Panc1 (cell line): ENCODE measurements at regions of chr1 and their contacts with region 1.

Region 1: DNA sequence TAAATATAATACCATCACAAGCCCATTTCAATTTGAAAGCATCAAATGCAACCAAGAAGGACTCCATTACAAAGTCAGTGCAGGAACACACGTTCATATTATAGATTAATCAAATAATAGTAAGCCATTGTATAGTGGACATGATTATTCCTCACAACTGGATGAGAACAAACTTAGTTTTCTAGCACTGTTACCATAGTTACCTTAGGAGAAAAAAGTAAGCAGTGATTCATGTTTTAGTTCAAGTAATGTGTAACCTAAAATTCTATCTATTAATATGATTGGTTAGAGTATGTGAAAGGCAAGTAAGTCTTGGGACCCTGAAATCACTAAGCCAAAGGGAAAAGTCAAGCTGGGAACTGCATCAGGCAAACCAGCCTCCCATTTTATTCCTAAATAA is 15.2 kb downstream of the SSX2IP start:
- DNase-seq: no peak
- ATAC-seq: no peak
- H3K4me3 ChIP-seq: no peak overlapping the region
- H3K27ac ChIP-seq: no peak overlapping the region
- H3K4me1 ChIP-seq: no peaks in the 10 kb centered on the region; the same call in 1 of the 2 replicates
- H3K27me3 ChIP-seq: no peaks in the 10 kb centered on the region
- CTCF ChIP-seq: no peak

Region 2: DNA sequence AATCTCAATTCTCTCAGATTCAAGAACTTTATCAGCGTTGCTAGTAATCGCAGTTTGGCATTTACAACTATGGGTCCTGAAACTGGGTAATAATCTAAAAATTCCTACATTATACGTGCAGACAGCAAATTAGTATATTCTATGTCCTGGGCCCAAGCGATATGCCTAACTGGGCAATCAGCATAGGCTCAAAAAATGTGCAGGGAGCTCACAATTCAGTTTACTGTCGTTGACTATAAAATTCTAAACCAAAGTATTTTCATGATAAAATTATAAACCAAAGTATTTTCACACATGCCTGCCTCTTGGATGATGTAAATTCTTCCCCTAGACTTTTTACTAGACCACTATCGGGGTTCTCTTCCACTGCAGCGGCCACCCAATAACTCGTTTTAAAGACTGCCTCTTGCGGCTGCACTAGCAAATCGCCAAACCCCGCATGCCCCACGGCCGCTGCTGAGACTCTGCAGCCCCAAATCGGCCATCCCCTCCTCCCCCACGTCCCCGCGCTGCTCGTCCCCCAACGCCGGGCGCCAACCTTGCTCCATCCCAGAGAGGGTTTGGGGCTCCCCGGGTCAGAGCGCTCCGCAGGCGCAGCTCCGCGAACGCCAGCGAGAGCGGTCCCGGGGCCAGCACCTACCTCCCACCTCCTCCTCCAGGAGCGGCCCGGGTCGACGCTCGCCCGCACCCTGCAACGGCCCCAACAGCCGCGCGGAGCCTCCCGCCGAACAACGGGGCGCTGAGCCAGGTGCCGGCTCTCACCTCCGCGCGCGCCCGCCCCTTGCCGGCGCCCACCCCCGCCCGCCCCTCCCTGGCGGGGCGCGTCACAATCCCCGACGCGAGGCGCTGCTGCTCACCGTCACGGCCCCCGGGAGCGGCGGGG is 14.7 kb after region 1 on chr1:
- CTCF ChIA-PET with region 1: no interaction called
- POLR2A ChIA-PET with region 1: interaction called, 17 read pairs
- in situ Hi-C with region 1: no loop called
- intact Hi-C with region 1: no loop called
- DNase-seq: no peak
- ATAC-seq: peak; percentile 61
- H3K4me3 ChIP-seq: peak overlapping the region; percentile 65 to 83
- H3K27ac ChIP-seq: peak overlapping the region; percentile 91
- H3K4me1 ChIP-seq: peaks cover 40% of the 10 kb centered on the region
- H3K27me3 ChIP-seq: no peaks in the 10 kb centered on the region
- CTCF ChIP-seq: peak; percentile 79

Region 3: GRCh38 chr1:84700070-84700469 is 25.0 kb after region 1 on chr1:
- CTCF ChIA-PET with region 1: interaction called, 4 read pairs
- POLR2A ChIA-PET with region 1: interaction called, 8 read pairs
- in situ Hi-C with region 1: no loop called
- intact Hi-C with region 1: loop called (anchors 2 kb)
- DNase-seq: no peak
- ATAC-seq: no peak
- H3K4me3 ChIP-seq: no peak overlapping the region
- H3K27ac ChIP-seq: no peak overlapping the region
- H3K4me1 ChIP-seq: peaks cover 9% of the 10 kb centered on the region
- H3K27me3 ChIP-seq: peaks cover 29% of the 10 kb centered on the region; the same call in 1 of the 2 replicates
- CTCF ChIP-seq: no peak